ENCODE measurements at regions of chr2 and their contacts with region 1.

Region 1: GRCh38 chr2:219509780-219510511 is 4.3 kb upstream of the ASIC4 start:
- DNase-seq: peak; percentile 37
- H3K27ac ChIP-seq: no peak overlapping the region
- CTCF ChIP-seq: peak; percentile 68

Region 2: DNA sequence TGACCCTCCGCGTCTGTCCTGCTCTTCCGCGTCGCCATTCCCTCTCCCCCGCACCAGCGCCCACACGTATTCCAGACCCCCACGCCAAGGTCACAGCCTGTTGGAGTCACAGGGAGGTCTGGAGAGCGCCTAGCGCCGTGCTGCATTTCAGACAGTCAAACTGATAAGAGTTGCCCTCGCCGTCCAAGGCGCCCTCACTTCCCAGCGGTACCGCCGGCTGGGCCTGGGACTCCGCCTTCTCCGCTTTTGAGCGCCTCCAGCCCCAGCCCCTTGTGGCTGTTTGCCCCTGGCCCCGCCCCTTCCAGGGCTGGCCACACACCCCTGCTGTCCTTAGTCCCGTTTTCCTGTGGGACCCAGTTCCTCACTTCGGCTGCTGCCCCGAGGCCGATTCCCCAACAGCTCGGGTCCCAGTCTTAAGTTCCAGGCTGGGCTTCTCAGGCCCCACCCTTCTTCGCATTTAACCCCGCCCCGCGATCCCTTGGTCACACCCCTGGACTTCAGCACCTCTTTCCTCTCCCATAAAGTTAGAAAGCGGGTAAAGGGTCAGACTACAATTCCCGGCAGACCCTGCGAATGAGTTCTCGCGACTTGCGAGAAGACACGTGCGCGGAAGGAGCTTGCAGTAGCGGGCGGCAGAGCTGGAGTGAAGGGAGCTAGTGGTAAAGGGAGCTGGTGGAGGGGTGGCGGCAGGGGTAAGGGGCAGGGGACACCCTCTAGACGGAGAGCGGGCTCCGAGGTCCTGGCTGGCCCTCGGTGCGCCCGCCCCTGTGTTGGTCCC is 11.5 kb before region 1 on chr2 and contains the start of gene GMPPA:
- CTCF ChIA-PET with region 1: interaction called, 14 read pairs
- POLR2A ChIA-PET with region 1: interaction called, 4 read pairs
- DNase-seq: peak; percentile 100
- H3K27ac ChIP-seq: peak within 1 kb of the TSS; percentile 95
- CTCF ChIP-seq: no peak